Endothelial cell of umbilical vein (primary cell): ENCODE measurements at regions of chr20 and their contacts with region 1.

Region 1: GRCh38 chr20:15475483-15475882 is 1097.8 kb downstream of the KIF16B start:
- DNase-seq: no peak
- H3K4me3 ChIP-seq: no peak overlapping the region
- H3K27ac ChIP-seq: no peak overlapping the region
- H3K4me1 ChIP-seq: no peaks in the 10 kb centered on the region
- H3K27me3 ChIP-seq: no peaks in the 10 kb centered on the region
- CTCF ChIP-seq: no peak
- POLR2A ChIP-seq: no peak

Region 2: GRCh38 chr20:15406072-15406471 is 69.4 kb before region 1 on chr20:
- CTCF ChIA-PET with region 1: no interaction called
- POLR2A ChIA-PET with region 1: no interaction called
- dilution Hi-C with region 1: no loop called
- intact Hi-C with region 1: loop called (anchors 10 kb)
- DNase-seq: no peak
- H3K4me3 ChIP-seq: no peak overlapping the region
- H3K27ac ChIP-seq: no peak overlapping the region
- H3K4me1 ChIP-seq: no peaks in the 10 kb centered on the region
- H3K27me3 ChIP-seq: no peaks in the 10 kb centered on the region
- CTCF ChIP-seq: no peak
- POLR2A ChIP-seq: no peak

Region 3: GRCh38 chr20:17226410-17227218 is 1751.1 kb after region 1 on chr20 and contains the start of gene PCSK2:
- CTCF ChIA-PET with region 1: no interaction called
- POLR2A ChIA-PET with region 1: no interaction called
- dilution Hi-C with region 1: no loop called
- intact Hi-C with region 1: no loop called
- DNase-seq: no peak
- H3K4me3 ChIP-seq: no peak within 1 kb of the TSS
- H3K27ac ChIP-seq: no peak within 1 kb of the TSS
- H3K4me1 ChIP-seq: no peaks in the 10 kb centered on the region
- H3K27me3 ChIP-seq: peaks cover 15 to 25% of the 10 kb centered on the region in 2 experiments
- CTCF ChIP-seq: no peak
- POLR2A ChIP-seq: no peak
- total RNA-seq, gene PCSK2: not detected in 2 replicates